Ovary (tissue), 10 donors: ENCODE measurements at regions of chr14 and their contacts with region 1.

Region 1: DNA sequence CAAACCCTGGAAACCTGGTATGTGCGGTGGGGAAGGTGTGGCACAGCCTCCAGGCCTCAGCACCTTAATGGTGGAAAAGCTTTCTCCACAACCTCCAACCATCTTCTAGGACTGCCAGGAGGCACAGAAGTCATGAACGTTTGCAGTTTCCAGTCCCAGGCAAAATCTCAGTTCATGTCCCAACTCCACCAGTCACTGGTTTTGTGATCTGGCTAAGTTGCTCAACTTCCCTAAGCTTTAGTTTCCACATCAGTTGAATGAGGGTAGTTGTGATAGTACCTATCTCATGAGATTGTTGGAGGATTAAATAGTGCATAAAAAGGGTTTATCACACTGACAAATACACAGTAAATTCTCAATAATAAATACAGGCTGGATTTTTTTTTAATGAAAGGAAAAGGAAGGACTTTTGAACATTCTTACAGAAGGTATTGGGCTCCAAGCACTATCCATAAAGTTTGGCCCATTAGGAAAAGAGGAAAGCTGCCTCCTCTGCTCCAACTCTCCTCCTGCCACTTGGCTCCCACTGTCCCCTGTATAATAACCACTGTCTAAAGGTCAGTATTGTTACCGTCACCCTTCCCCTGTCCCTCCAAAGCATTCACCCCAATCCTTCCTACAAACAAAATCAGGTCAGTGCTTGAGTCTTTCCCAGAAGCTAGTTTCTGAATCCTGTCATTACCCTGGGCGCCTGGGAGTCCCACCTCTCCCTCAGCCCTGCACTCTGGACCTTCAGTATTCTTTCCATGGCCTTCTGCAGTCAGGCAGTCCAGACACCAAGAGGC is 6.3 kb downstream of the PCK2 start:
- DNase-seq: no peak
- H3K4me3 ChIP-seq: no peak overlapping the region
- H3K27ac ChIP-seq: no peak overlapping the region
- H3K4me1 ChIP-seq: no peaks in the 10 kb centered on the region
- H3K27me3 ChIP-seq: no peaks in the 10 kb centered on the region
- CTCF ChIP-seq: no peak
- EP300 ChIP-seq: no peak
- POLR2A ChIP-seq: no peak

Region 2: GRCh38 chr14:23385642-23386265 is 714.6 kb before region 1 on chr14:
- intact Hi-C with region 1: no loop called
- DNase-seq: no peak
- H3K4me3 ChIP-seq: no peak overlapping the region
- H3K27ac ChIP-seq: no peak overlapping the region
- H3K4me1 ChIP-seq: no peaks in the 10 kb centered on the region
- H3K27me3 ChIP-seq: no peaks in the 10 kb centered on the region
- CTCF ChIP-seq: no peak
- EP300 ChIP-seq: no peak
- POLR2A ChIP-seq: no peak

Region 3: GRCh38 chr14:24064091-24064749 is 36.2 kb before region 1 on chr14:
- intact Hi-C with region 1: loop called in 3 of 4 experiments (anchors 5 to 10 kb)
- DNase-seq: no peak
- H3K4me3 ChIP-seq: no peak overlapping the region
- H3K27ac ChIP-seq: no peak overlapping the region
- H3K4me1 ChIP-seq: no peaks in the 10 kb centered on the region
- H3K27me3 ChIP-seq: no peaks in the 10 kb centered on the region
- CTCF ChIP-seq: no peak
- EP300 ChIP-seq: no peak
- POLR2A ChIP-seq: no peak

Region 4: DNA sequence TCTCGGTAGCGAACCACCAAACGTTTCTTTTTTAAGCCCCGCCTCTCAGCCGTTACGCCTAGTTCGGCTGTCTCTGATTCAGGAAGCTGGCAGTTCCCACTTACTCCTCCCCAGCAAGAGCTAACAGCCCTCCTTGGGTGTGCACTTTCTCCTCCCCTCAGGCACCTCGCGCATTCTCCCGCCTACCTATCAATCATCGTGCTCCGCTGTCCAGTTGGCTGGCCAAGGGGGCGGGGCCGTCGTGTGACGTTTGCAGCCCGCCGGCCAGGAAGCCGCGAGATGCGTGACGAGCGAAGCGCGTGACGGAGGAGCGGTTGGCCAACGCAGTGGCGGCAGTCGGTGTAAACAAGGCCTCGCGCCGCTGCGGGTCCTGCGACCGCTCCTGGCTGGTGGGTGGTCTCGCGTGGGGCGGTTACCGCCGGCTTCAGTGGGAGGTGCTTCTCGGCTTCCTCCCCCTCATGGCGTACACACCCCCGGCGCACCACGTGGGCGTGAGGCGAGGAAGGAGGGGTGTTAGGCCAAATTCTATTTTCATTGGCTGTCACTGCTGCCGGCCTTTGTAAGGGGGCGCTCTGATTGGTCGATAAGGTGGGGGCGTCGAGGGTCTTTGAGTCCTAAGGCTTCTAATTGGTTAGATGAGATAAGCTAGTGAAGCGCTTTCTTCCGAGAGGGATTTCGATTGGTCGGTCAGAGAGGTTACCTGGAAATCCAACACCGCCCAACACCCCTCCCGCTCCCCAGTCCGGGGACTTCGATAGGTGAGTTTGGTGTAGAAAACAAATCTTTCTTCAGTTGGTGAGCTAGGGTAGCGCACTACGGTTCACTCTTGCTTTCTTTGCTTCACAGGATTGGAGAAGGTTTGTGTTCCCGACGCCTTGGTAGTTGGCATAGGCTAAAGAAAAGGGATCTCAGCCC is 14.4 kb after region 1 on chr14 and contains the starts of genes DCAF11 and NRL:
- intact Hi-C with region 1: no loop called
- DNase-seq: peak; percentile 98 to 99 (median 99)
- H3K4me3 ChIP-seq: peak within 1 kb of the TSS; percentile 84
- H3K27ac ChIP-seq: peak within 1 kb of the TSS; percentile 97 to 100
- H3K4me1 ChIP-seq: peaks cover 6% of the 10 kb centered on the region
- H3K27me3 ChIP-seq: no peaks in the 10 kb centered on the region
- CTCF ChIP-seq: no peak
- EP300 ChIP-seq: peak; percentile 98
- POLR2A ChIP-seq: peak; percentile 74
- total RNA-seq, gene DCAF11: 34.7 to 71.4 (median 51.5) TPM
- total RNA-seq, gene NRL: 1.0 to 4.1 (median 2.8) TPM

Region 5: DNA sequence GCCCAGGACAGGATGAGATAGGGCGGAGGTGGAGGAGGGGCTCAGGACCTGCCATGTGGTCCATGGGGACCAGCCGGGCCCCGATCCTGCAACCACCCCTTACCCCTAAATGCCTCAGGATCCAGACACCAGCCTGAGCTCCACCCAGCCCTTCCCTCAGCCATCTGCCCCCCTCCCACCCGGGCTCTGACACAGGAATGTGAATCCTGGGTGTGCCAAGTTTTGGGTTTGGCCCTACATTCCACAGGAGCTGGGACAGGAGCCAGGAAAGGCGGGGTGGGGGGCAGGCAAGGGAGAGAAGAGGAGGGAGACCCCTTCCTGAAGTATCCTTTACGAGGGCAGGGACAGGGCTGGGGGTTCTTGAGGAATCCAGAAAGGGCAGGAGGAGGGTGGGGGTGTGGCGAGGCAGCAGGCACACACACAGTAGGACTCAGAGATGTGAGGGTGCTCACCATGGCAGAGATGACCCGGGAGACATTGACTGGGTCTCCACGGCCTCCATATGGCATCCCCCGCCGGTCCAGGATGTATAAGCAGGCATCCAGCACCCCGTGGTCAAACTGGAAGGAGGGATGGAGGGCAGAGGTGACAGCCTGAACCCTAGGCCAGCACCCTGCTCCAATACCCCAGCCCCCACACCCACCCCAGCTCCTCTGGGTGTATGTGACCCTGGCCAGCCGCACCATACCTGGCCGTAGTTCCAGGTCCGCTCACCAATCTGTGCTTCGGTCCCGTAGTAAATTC is 159.0 kb after region 1 on chr14:
- intact Hi-C with region 1: no loop called
- DNase-seq: peak in 4 of 5 donors; percentile 36 to 66 (median 49)
- H3K4me3 ChIP-seq: no peak overlapping the region
- H3K27ac ChIP-seq: no peak overlapping the region
- H3K4me1 ChIP-seq: peaks cover 3% of the 10 kb centered on the region
- H3K27me3 ChIP-seq: no peaks in the 10 kb centered on the region
- CTCF ChIP-seq: no peak
- EP300 ChIP-seq: no peak
- POLR2A ChIP-seq: no peak